Vagina (tissue), 2 donors: ENCODE measurements at regions of chr1 and their contacts with region 1.

Region 1: DNA sequence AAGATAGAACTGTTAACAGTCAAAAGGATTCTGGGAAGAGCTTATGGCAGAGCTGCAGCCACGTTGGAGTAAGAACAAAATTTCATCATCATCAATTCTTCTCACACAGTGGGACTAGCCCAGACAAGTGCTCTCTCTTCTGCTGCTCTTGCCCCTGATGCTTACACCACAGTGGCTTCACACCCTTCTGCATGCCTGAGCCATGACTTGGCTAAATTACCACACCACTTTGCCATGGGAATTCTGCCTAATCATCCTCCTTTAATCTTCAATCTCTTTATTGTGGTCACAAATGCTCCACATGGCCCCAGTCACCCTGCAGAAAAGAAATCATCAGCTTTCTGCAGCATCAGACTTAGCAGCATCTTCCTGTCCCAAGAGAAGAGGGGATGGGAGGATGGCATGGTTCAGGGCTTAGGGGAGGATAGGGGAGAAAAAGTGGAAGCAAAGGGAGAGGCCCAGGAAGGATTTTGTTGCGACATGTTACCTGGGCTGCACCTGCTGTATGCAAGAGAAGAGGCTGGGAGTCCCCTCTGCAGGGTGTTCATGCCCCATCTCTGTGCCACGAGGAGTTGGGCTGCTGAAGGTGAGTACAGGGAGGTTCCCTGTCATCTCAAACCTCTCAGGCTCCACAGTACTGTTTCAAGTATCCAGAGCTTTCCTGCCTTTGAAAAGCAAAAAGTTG is 8.9 kb upstream of the RPTN start:
- DNase-seq: no peak
- H3K4me3 ChIP-seq: no peak overlapping the region
- H3K27ac ChIP-seq: no peak overlapping the region
- H3K4me1 ChIP-seq: peaks cover 33% of the 10 kb centered on the region
- H3K27me3 ChIP-seq: no peaks in the 10 kb centered on the region
- CTCF ChIP-seq: no peak
- POLR2A ChIP-seq: no peak

Region 2: DNA sequence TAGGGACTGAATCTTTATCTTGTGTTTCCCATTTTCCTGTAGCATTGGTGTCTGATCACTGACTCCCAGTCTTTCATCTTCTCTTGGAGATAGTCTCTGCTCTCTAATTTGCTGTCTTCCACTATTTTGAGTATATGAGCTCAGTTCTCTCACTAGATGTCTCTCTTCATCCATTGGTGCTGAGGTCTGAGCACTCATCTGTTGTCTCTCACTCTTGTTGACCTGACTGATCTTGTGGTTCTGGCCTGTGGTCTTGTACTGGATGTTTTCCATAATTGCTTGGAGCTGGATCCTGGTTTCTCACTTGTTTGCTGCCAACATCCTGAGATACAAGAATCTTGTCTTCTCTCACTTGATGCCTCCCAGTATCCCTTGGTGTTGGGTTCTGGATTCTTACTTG is 106.0 kb before region 1 on chr1:
- intact Hi-C with region 1: loop called (anchors 10 kb)
- DNase-seq: no peak
- H3K4me3 ChIP-seq: no peak overlapping the region
- H3K27ac ChIP-seq: no peak overlapping the region
- H3K4me1 ChIP-seq: no peaks in the 10 kb centered on the region
- H3K27me3 ChIP-seq: no peaks in the 10 kb centered on the region
- CTCF ChIP-seq: no peak
- POLR2A ChIP-seq: no peak